Heart left ventricle (tissue), 16 donors: ENCODE measurements at regions of chr20 and their contacts with region 1.

Region 1: DNA sequence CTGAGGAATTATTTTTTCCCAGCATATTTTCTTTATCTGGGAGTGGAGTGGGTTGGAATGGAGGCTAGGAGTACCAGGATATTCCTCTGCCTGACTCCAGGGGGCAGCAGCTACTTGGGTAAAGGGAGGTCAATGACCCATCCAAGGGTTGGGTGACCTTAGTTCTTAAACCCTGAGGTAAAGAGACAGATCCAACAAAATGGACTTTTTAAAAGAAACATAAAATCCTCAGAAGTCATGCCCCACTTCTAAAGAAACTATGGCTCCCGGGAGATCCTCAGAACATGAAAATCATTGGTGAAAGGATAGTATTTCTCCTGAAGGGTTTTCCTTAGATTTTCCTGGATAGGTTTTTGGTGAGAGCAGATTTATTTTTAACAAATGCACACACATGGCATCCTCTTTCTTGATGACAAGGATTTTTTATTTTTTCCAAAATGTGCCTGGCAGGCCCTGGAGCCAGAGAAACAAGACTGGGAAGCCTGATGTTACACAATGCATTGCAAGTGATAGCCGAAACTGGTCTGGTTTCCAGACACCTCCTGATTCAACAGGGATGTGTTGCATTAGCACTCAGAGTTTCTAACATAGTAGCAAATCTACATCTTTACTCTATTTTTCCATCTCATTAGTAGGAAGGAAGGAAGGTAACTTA is 240.9 kb upstream of the BTBD3 start:
- DNase-seq: peak; percentile 26 to 58 (median 48)
- ATAC-seq: peak in 3 of 4 donors; percentile 90 to 95 (median 90)
- H3K4me3 ChIP-seq: no peak overlapping the region
- H3K27ac ChIP-seq: no peak overlapping the region
- H3K4me1 ChIP-seq: peaks cover 0 to 22% (median 0%) of the 10 kb centered on the region in 12 donors
- H3K27me3 ChIP-seq: no peaks in the 10 kb centered on the region
- CTCF ChIP-seq: peak; percentile 72 to 92 (median 81)
- POLR2A ChIP-seq: no peak

Region 2: GRCh38 chr20:12012241-12013222 is 335.8 kb after region 1 on chr20:
- intact Hi-C with region 1: loop called in 1 of 10 experiments (anchors 10 kb)
- DNase-seq: peak in 1 of 5 donors; percentile 11
- ATAC-seq: peak in 3 of 4 donors; percentile 41 to 68 (median 41)
- H3K4me3 ChIP-seq: no peak overlapping the region
- H3K27ac ChIP-seq: no peak overlapping the region
- H3K4me1 ChIP-seq: peaks cover 0 to 21% (median 6%) of the 10 kb centered on the region in 12 donors
- H3K27me3 ChIP-seq: no peaks in the 10 kb centered on the region
- CTCF ChIP-seq: peak; percentile 62 to 91 (median 74)
- POLR2A ChIP-seq: no peak

Region 3: DNA sequence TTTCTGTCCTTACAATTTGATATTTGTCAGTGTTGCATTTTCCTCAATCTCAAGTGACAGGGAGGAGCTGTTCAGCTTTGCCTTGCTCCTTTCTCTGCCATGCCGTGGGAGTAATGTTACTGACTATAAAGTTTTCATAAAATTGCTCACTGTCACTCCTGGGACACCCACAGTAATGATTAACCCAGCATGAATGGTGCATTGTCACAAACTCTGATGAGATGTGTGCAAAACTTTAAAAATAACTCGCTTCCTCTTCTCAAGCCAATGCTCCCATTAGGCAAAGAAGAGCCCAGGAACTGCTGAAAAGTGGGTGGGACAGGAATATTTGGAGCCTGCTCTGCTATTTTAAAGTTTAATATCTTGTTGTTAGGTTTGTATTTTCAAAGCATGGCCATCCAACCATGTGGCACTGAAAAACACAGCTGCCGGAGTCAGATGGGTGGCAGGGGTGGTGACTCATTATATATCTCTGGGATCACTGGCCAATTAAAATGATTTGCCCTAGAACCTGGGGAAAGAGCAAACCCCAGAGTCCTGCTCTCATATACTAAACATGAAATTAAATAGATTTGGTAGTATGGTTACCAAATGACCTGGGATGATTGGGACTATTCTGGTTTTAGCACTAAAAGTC is 501.0 kb after region 1 on chr20:
- intact Hi-C with region 1: no loop called
- DNase-seq: no peak
- ATAC-seq: peak in 3 of 4 donors; percentile 57 to 66 (median 66)
- H3K4me3 ChIP-seq: no peak overlapping the region
- H3K27ac ChIP-seq: peak overlapping the region in 5 of 12 donors; percentile 9 to 41 (median 40)
- H3K4me1 ChIP-seq: peaks cover 0 to 24% (median 8%) of the 10 kb centered on the region in 12 donors
- H3K27me3 ChIP-seq: no peaks in the 10 kb centered on the region
- CTCF ChIP-seq: no peak
- POLR2A ChIP-seq: no peak